ENCODE measurements at regions of chr6 and their contacts with region 1.

Region 1: GRCh38 chr6:69732640-69733039 is 64.2 kb downstream of the LMBRD1 start:
- DNase-seq: no peak
- ATAC-seq: peak; percentile 74; the same call in 1 of the 2 replicates
- H3K4me3 ChIP-seq: no peak overlapping the region
- H3K27ac ChIP-seq: no peak overlapping the region
- H3K4me1 ChIP-seq: no peaks in the 10 kb centered on the region
- H3K27me3 ChIP-seq: no peaks in the 10 kb centered on the region
- CTCF ChIP-seq: 0 out of 2 replicates have a peak, but pooled peaks have one; percentile 23
- POLR2A ChIP-seq: no peak
- RAD21 ChIP-seq: 0 out of 2 replicates have a peak, but pooled peaks have one; percentile 5

Region 2: GRCh38 chr6:68891419-68891818 is 841.2 kb before region 1 on chr6:
- CTCF ChIA-PET with region 1: no interaction called
- POLR2A ChIA-PET with region 1: no interaction called
- dilution Hi-C with region 1: no loop called
- in situ Hi-C with region 1: no loop called
- intact Hi-C with region 1: loop called (anchors 10 kb)
- DNase-seq: no peak
- ATAC-seq: no peak
- H3K4me3 ChIP-seq: no peak overlapping the region
- H3K27ac ChIP-seq: no peak overlapping the region
- H3K4me1 ChIP-seq: no peaks in the 10 kb centered on the region
- H3K27me3 ChIP-seq: no peaks in the 10 kb centered on the region
- CTCF ChIP-seq: no peak
- POLR2A ChIP-seq: no peak
- RAD21 ChIP-seq: no peak

Region 3: GRCh38 chr6:69466979-69467570 is 265.6 kb before region 1 on chr6:
- CTCF ChIA-PET with region 1: no interaction called
- POLR2A ChIA-PET with region 1: no interaction called
- dilution Hi-C with region 1: no loop called
- in situ Hi-C with region 1: no loop called
- intact Hi-C with region 1: no loop called
- DNase-seq: no peak
- ATAC-seq: no peak
- H3K4me3 ChIP-seq: no peak overlapping the region
- H3K27ac ChIP-seq: no peak overlapping the region
- H3K4me1 ChIP-seq: no peaks in the 10 kb centered on the region
- H3K27me3 ChIP-seq: no peaks in the 10 kb centered on the region
- CTCF ChIP-seq: no peak
- POLR2A ChIP-seq: no peak
- RAD21 ChIP-seq: no peak

Region 4: DNA sequence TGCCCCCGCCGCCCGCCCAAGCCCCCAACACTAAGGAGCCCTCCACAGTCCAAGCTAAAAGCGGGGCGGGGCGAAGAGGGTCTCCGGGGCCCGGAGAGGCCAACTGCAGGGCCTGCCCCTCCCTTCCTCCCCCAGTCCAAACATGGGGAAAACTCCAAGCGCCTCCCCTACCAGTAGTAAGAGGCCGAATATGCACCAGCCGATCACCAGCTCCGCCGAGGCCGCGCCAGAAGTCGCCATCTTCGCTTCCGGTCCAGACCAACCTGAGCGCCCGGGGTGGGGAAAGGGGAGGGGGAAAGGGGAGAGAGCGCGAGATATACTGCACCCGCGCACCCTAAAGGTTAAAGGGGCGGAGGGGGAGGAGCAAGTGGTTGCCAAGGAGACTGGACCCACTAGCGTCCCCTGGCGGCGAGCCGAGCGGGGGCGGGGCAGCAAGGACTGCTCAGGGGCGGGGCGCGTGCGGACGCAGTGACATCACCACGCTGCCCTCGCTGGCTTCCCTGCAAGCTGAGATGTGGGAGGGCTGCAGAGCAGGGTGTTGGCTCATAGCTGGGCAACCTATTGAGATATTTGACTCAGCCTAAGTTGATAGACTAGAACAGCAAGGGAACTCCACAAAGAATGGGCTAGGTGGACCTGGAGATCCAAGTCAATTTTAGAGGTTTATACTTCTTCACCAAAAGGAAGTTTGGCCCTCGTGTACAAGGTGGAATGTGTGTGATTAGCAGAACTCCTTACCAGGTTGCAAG is 64.2 kb after region 1 on chr6 and contains the start of gene LMBRD1:
- CTCF ChIA-PET with region 1: no interaction called
- POLR2A ChIA-PET with region 1: no interaction called
- dilution Hi-C with region 1: no loop called
- in situ Hi-C with region 1: no loop called
- intact Hi-C with region 1: loop called (anchors 1 kb)
- DNase-seq: peak; percentile 94
- ATAC-seq: peak; percentile 98
- H3K4me3 ChIP-seq: peak within 1 kb of the TSS; percentile 94
- H3K27ac ChIP-seq: peak within 1 kb of the TSS; percentile 65
- H3K4me1 ChIP-seq: 0 out of 2 replicates have a peak, but pooled peaks cover 2% of the 10 kb centered on the region
- H3K27me3 ChIP-seq: no peaks in the 10 kb centered on the region
- CTCF ChIP-seq: peak; percentile 85
- POLR2A ChIP-seq: 0 out of 2 replicates have a peak, but pooled peaks have one; percentile 46
- RAD21 ChIP-seq: no peak
- total RNA-seq, gene LMBRD1: 3.9 and 12.8 TPM in 2 replicates

Region 5: DNA sequence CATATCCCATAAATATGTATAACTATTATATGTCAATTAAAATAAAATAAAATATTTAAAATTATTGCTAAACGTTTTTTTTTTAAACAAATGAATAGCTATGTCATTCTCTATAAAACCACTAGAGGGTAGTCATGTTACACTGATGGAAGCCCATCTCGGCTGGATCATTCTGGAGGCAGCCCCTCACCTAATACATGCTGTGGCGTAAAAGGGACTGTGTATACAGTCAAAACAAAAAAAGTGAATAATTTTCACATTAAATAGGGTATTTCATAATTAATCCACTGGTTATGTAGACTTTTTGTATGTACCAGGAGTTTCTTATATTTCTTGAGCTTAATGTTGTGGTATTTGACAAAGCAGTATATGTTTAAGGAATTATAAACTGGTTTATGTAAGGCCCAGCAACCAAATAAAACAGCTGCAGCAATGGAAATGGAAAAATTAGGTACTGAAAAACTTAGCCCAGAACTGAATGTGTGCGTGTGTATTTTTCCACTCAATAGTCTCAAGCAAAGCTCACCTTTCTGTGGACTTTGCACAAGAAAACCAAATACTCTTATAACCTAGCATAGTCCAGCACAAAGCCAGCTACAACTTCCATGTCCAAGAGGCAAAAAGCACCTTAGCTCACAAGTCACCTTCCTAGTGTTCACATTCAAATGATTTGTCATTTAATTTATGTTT is 488.5 kb after region 1 on chr6:
- CTCF ChIA-PET with region 1: no interaction called
- POLR2A ChIA-PET with region 1: no interaction called
- dilution Hi-C with region 1: no loop called
- in situ Hi-C with region 1: no loop called
- intact Hi-C with region 1: no loop called
- DNase-seq: peak; percentile 20
- ATAC-seq: peak; percentile 87
- H3K4me3 ChIP-seq: no peak overlapping the region
- H3K27ac ChIP-seq: no peak overlapping the region
- H3K4me1 ChIP-seq: no peaks in the 10 kb centered on the region
- H3K27me3 ChIP-seq: peaks cover 6% of the 10 kb centered on the region
- CTCF ChIP-seq: peak; percentile 62
- POLR2A ChIP-seq: no peak
- RAD21 ChIP-seq: peak; percentile 72